Posterior vena cava (tissue), 2 donors: ENCODE measurements at regions of chr1 and their contacts with region 1.

Region 1: DNA sequence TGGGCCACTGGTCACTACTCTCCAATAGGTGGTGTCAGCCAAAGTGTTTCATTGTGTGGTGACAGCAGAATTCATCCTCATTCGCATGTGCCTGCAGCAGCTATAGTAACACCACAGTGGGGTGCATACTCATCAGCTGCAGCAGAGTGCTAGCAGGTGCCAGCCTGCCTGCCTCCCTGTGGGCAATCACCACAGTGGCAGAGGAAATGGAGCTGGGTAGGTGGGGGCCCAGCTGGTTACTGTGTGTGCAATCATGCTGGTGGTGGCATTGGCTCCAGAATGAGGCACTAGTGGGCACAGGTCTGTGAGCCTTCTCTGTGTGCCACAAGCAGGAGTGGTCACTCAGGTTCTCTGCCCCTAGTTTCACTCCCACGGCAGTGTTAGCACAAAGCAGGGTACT is 579.2 kb downstream of the PTPRC start:
- DNase-seq: no peak

Region 2: DNA sequence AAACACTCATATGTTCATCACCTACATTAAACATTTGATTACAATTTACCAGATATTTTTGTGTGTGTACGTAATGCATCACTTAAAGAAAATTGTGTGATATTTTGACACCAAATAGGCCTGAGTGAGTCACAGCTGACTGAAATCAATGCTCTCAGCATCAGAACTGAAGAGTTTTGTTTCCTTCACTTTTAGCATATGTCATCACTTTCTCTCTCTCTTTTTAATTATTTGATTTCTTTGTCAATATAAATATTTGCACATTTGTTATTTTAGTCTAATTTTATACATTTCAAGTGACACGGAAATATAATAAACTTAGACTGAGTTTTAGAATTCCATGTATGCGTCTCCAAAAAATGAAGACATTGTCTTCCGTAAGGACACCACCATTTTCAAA is 33.9 kb before region 1 on chr1:
- intact Hi-C with region 1: loop called in 1 of 2 experiments (anchors 2 kb)
- DNase-seq: no peak